ENCODE measurements at regions of chr11 and their contacts with region 1.

Region 1: DNA sequence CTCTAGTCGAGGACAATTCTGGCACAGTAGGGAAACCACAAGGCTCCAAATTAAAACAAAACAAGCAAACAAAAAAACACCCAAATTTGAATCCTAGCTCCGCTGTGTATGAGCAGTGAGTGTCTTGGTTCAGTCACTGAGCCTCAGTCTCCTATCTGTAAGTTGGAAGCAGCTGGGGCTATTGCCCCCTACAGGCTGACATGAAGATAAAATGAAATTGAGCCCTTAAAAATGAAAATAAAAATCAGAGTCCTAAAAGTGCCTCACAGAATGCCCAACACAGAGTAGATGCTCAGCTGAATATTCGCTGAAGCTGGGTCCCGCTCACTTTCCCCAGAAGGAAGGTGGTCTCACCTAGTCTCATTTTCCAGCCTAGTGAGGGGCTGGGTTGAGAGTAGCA is 65.2 kb downstream of the PDE2A start:
- DNase-seq: no peak
- ATAC-seq: peak; percentile 64
- H3K4me3 Mint-ChIP-seq: no peak overlapping the region
- H3K27ac Mint-ChIP-seq: no peak overlapping the region
- H3K4me1 Mint-ChIP-seq: peaks cover 12% of the 10 kb centered on the region
- H3K27me3 Mint-ChIP-seq: peaks cover 50% of the 10 kb centered on the region

Region 2: DNA sequence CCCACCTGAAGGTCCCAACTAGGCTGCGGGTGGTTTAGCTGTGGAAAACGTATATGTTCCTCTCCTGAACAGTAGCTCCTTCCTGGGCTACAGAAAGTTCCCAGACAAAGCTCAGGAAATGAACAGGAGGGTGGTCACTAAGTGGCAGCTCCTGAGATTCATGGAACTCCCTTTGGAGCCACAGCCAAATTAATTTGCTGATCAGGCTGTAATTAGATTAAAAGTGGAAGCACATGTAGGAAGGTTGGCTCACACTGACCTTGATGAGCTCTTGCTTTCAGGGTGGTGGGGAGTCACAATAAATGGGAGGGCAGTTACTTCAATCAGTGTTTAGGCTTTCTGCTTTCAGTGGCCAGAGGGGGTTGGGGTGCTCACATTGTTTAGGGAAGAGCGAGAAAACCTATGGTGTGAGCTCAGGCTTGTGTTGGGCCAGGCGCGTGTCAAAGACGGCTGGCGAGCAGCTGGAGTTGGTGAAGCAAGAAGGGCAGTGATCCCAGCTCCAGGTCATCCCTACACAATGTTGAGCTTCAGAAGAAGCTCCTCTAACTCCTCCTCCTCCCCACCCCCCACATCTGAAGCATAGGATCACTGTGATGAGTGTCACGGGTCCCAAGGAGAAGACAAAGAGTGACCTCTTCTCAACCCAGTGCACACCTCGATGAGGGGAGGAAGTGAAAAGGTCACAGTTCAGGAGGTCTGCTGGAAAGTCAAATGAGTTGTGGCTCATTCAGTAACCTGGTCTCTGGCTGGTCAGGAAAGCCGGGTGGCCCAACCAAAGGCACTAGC is 217.2 kb before region 1 on chr11:
- CTCF ChIA-PET with region 1: no interaction called
- DNase-seq: no peak
- ATAC-seq: no peak
- H3K4me3 Mint-ChIP-seq: no peak overlapping the region
- H3K27ac Mint-ChIP-seq: no peak overlapping the region
- H3K4me1 Mint-ChIP-seq: no peaks in the 10 kb centered on the region
- H3K27me3 Mint-ChIP-seq: no peaks in the 10 kb centered on the region

Region 3: DNA sequence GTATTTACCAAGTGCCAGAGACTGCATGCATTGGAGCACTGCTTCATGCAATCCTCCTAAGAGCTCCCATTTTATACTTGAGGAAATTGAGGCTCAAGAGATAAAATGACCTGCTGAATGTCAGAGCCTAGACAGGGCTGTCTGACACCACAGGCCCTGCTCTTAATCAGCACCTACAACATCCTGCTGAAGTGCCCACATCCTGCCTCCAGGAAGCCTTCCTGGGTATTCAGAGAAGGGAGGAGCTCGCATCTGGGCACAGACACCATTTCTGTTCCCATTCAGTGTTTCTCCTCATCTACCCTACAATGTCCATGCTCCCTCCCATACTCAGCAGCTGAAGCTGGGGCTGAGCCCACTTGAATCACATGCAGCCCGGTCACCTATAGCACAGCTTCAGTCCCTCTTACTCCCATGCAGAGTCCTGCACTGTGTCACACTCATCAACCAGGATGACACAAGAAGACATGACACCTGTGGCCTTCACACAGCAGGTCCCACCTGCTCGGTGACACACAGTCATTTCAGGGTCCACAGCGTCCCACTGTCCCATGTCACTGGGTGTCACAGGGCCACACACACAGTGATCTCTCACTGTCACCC is 12.1 kb after region 1 on chr11:
- CTCF ChIA-PET with region 1: interaction called, 28 read pairs
- DNase-seq: peak; percentile 72
- ATAC-seq: peak; percentile 85
- H3K4me3 Mint-ChIP-seq: no peak overlapping the region
- H3K27ac Mint-ChIP-seq: peak overlapping the region; percentile 65
- H3K4me1 Mint-ChIP-seq: peaks cover 35% of the 10 kb centered on the region
- H3K27me3 Mint-ChIP-seq: peaks cover 9% of the 10 kb centered on the region

Region 4: GRCh38 chr11:72752088-72752914 is 143.3 kb after region 1 on chr11 and contains the start of gene ARAP1:
- CTCF ChIA-PET with region 1: no interaction called
- DNase-seq: peak; percentile 85
- ATAC-seq: peak; percentile 91
- H3K4me3 Mint-ChIP-seq: peak within 1 kb of the TSS; percentile 81
- H3K27ac Mint-ChIP-seq: peak within 1 kb of the TSS; percentile 91
- H3K4me1 Mint-ChIP-seq: peaks cover 33% of the 10 kb centered on the region
- H3K27me3 Mint-ChIP-seq: no peaks in the 10 kb centered on the region
- total RNA-seq, gene ARAP1: 96.5 to 104 TPM

Region 5: DNA sequence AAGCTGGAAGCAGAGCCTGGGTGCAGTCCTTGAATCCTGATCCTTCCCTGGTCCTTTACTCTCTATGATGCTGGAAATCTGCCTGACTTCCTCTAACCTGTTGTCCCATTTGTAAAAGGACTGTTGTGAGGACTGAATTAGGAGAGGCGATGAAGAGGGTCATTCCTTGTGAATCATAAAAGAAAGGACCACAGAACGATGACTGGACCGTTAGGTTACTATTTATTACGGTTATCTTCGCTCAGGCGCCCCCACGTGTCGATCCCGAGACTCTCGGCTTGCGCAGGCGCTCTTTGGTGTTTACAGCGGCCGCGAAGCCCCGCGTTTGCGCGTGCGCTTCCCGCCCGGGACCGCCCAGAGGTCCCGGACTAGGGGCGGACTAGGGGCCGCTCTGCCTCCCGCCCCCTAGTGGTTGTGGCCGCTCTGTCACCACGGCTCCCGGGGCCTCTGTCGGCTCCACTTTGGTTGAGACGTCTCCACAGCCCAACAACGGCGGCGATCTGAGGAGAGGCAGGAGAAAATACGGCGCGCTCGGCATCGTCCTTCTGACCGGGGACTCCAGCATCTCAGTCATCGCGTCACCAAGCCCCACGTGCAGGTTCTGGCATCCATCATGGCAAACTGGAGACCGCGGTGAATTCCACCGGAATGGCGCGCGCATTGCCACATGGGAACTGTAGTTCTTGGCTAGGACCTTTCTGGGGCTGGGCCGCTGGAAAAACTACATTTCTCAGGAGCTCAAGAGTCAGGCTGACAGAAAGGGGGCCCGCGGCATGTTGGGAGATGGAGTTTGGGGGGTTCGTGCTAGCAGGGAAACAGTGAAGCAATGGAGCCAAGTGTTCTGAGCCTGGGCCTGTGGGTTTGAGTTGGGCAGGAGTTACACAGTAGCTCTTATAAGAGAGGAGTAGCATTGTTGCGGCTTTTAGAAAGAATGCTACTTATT is 184.7 kb after region 1 on chr11 and contains the start of gene STARD10:
- CTCF ChIA-PET with region 1: no interaction called
- DNase-seq: peak; percentile 96
- ATAC-seq: peak; percentile 97
- H3K4me3 Mint-ChIP-seq: peak within 1 kb of the TSS; percentile 87
- H3K27ac Mint-ChIP-seq: peak within 1 kb of the TSS; percentile 98
- H3K4me1 Mint-ChIP-seq: peaks cover 24% of the 10 kb centered on the region
- H3K27me3 Mint-ChIP-seq: no peaks in the 10 kb centered on the region
- total RNA-seq, gene STARD10: 8.4 to 18.4 TPM

Measured in activated CD8-positive, alpha-beta memory T cell treated with anti-CD3 and anti-CD28 coated beads, Interleukin-2, amount 10 ng/mL, durations not matched to agents 7 days and 5 days (primary cell).